B cell (primary cell): ENCODE measurements at regions of chr4 and their contacts with region 1.

Region 1: DNA sequence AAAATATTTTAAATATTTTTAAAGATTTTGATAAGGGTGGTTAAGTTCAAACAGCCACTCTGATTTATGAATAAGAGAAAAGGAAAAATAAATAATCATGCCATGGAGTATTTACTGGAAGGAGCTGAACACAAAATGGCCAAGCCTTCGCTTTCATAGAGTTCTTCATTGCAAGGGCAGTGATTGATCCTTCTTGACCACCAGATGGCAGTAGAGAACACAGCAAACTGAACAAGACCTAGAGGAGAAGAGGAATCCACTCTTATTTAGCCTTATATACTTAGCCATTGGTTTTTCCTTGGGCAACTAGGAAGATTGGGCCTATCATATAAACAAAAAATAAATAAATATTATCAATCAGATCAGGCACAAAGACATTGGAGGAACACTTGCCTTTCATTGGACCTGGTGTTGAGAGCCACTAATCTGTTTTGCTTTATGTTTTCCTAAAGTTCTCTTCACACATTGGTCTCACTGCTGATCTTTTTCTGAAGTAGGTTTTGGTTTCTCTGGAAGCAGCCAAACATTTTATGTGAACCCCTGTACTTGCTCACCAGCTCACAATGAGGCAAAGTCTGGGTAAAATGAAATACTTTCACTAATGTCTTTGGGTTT is 58.1 kb upstream of the PARM1 start:
- DNase-seq: peak; percentile 79
- ATAC-seq: peak; percentile 80
- H3K4me3 ChIP-seq: no peak overlapping the region
- H3K4me3 Mint-ChIP-seq: no peak overlapping the region
- H3K27ac ChIP-seq: no peak overlapping the region
- H3K27ac Mint-ChIP-seq: no peak overlapping the region
- H3K4me1 ChIP-seq: peaks cover 5 to 14% of the 10 kb centered on the region in 2 donors
- H3K4me1 Mint-ChIP-seq: peaks cover 16% of the 10 kb centered on the region
- H3K27me3 ChIP-seq: no peaks in the 10 kb centered on the region
- H3K27me3 Mint-ChIP-seq: peaks cover 12% of the 10 kb centered on the region
- CTCF ChIP-seq: peak; percentile 94

Region 2: GRCh38 chr4:74370912-74371311 is 503.9 kb before region 1 on chr4:
- CTCF ChIA-PET with region 1: no interaction called
- POLR2A ChIA-PET with region 1: no interaction called
- intact Hi-C with region 1: loop called (anchors 10 kb)
- DNase-seq: peak; percentile 52
- ATAC-seq: peak; percentile 64
- H3K4me3 ChIP-seq: no peak overlapping the region
- H3K4me3 Mint-ChIP-seq: no peak overlapping the region
- H3K27ac ChIP-seq: no peak overlapping the region
- H3K27ac Mint-ChIP-seq: no peak overlapping the region
- H3K4me1 ChIP-seq: peaks cover 0 to under 1% of the 10 kb centered on the region in 2 donors
- H3K4me1 Mint-ChIP-seq: no peaks in the 10 kb centered on the region
- H3K27me3 ChIP-seq: peaks cover 0 to 7% (median 3%) of the 10 kb centered on the region in 4 experiments
- H3K27me3 Mint-ChIP-seq: peaks cover 22% of the 10 kb centered on the region
- CTCF ChIP-seq: peak; percentile 75

Region 3: DNA sequence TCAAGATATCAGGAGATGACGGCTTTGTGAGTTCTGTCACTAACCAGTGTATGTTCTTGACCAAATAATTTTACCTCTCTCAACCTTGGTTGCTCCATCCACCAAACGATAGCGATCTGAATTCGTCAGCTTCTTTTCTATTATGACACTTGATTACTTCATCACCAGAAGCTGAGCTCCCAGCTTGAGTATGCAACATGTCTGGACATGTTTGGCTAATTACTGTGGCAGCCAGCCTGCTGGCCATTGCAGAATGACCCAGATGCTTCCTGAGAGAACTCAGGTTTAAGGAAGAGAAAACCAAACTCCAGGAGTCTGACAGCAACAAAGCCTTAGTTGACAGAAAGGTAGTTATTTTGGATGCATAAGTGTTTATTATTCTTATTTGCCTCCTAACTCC is 11.6 kb after region 1 on chr4:
- CTCF ChIA-PET with region 1: interaction called, 30 read pairs
- POLR2A ChIA-PET with region 1: no interaction called
- intact Hi-C with region 1: no loop called
- DNase-seq: no peak
- ATAC-seq: no peak
- H3K4me3 ChIP-seq: no peak overlapping the region
- H3K4me3 Mint-ChIP-seq: no peak overlapping the region
- H3K27ac ChIP-seq: no peak overlapping the region
- H3K27ac Mint-ChIP-seq: no peak overlapping the region
- H3K4me1 ChIP-seq: no peaks in the 10 kb centered on the region
- H3K4me1 Mint-ChIP-seq: no peaks in the 10 kb centered on the region
- H3K27me3 ChIP-seq: no peaks in the 10 kb centered on the region
- H3K27me3 Mint-ChIP-seq: peaks cover 10% of the 10 kb centered on the region
- CTCF ChIP-seq: no peak

Region 4: GRCh38 chr4:75118739-75119138 is 243.9 kb after region 1 on chr4:
- CTCF ChIA-PET with region 1: interaction called, 60 read pairs
- POLR2A ChIA-PET with region 1: no interaction called
- intact Hi-C with region 1: loop called (anchors 1 kb)
- DNase-seq: no peak
- ATAC-seq: no peak
- H3K4me3 ChIP-seq: no peak overlapping the region
- H3K4me3 Mint-ChIP-seq: no peak overlapping the region
- H3K27ac ChIP-seq: no peak overlapping the region
- H3K27ac Mint-ChIP-seq: no peak overlapping the region
- H3K4me1 ChIP-seq: no peaks in the 10 kb centered on the region
- H3K4me1 Mint-ChIP-seq: peaks cover 7% of the 10 kb centered on the region
- H3K27me3 ChIP-seq: no peaks in the 10 kb centered on the region
- H3K27me3 Mint-ChIP-seq: no peaks in the 10 kb centered on the region
- CTCF ChIP-seq: no peak

Region 5: DNA sequence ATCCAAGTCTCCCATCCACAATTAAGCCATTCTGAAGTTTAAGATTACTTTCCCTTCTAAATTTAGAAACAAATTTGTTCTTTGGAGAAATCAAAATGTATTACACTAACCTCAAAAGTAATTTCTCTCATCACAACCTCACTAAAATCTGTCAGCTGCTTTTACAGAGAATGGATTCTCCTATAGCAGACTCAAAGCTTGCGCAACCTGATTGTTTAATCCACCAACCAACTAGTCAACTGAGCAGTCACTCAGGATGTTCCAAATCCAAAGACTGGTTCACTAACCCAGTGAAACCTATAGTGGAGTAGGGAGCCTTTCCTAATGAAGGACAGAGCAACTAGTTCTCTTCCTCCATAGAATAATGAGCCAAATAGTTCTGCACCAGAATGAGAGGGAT is 595.0 kb after region 1 on chr4:
- CTCF ChIA-PET with region 1: interaction called, 5 read pairs
- POLR2A ChIA-PET with region 1: no interaction called
- intact Hi-C with region 1: loop called (anchors 5 kb)
- DNase-seq: no peak
- ATAC-seq: no peak
- H3K4me3 ChIP-seq: no peak overlapping the region
- H3K4me3 Mint-ChIP-seq: no peak overlapping the region
- H3K27ac ChIP-seq: no peak overlapping the region
- H3K27ac Mint-ChIP-seq: no peak overlapping the region
- H3K4me1 ChIP-seq: no peaks in the 10 kb centered on the region
- H3K4me1 Mint-ChIP-seq: no peaks in the 10 kb centered on the region
- H3K27me3 ChIP-seq: no peaks in the 10 kb centered on the region
- H3K27me3 Mint-ChIP-seq: no peaks in the 10 kb centered on the region
- CTCF ChIP-seq: no peak

Region 6: GRCh38 chr4:75844151-75844662 is 969.3 kb after region 1 on chr4:
- CTCF ChIA-PET with region 1: interaction called, 13 read pairs
- POLR2A ChIA-PET with region 1: no interaction called
- intact Hi-C with region 1: loop called (anchors 10 kb)
- DNase-seq: no peak
- ATAC-seq: no peak
- H3K4me3 ChIP-seq: no peak overlapping the region
- H3K4me3 Mint-ChIP-seq: no peak overlapping the region
- H3K27ac ChIP-seq: no peak overlapping the region
- H3K27ac Mint-ChIP-seq: no peak overlapping the region
- H3K4me1 ChIP-seq: no peaks in the 10 kb centered on the region
- H3K4me1 Mint-ChIP-seq: peaks cover 6% of the 10 kb centered on the region
- H3K27me3 ChIP-seq: peaks cover 0 to 3% (median 0%) of the 10 kb centered on the region in 4 experiments
- H3K27me3 Mint-ChIP-seq: peaks cover 3% of the 10 kb centered on the region
- CTCF ChIP-seq: no peak